ENCODE measurements at regions of chr17 and their contacts with region 1.

Region 1: DNA sequence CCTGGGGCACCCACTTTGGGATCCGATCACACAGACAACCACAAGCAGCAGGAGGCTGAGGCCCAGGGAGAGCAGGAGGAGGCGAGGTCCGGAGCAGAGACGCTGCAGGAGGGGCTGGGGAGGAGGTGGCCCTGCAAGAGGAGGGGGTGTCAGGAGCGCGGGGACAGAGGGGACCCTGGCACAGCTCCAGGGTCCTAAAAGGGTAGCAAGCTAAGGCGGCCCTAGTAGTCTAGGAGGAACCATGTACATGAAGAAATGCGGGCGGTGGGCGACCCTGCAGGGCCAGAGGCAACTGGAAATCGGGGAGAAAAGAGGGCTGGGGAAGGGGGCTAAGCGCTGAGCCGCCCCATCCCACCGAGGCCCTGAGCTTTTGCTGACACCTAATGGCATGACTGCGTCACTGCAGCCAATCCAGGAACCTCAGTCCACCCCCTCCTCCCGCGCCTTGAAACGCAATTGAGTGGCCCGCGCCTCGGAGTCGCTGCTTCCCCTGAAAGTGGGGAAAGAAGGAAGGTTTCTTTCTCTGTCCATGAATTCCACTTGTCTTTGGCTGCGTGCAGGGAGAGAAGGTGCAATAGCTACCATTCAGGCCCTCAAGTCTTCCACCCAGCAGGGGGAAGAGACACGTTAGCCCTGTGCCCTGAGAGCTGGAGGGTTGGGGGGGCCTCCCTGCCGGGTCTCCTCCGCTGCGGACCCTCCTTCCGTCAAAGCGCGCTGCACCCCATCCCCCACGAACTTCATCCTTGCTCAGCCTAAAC is 1.8 kb downstream of the ASGR1 start:
- DNase-seq: peak; percentile 74
- H3K4me3 Mint-ChIP-seq: peak overlapping the region; percentile 53
- H3K27ac Mint-ChIP-seq: peak overlapping the region; percentile 52
- H3K4me1 Mint-ChIP-seq: peaks cover 13% of the 10 kb centered on the region
- H3K27me3 Mint-ChIP-seq: peaks cover 14% of the 10 kb centered on the region

Region 2: DNA sequence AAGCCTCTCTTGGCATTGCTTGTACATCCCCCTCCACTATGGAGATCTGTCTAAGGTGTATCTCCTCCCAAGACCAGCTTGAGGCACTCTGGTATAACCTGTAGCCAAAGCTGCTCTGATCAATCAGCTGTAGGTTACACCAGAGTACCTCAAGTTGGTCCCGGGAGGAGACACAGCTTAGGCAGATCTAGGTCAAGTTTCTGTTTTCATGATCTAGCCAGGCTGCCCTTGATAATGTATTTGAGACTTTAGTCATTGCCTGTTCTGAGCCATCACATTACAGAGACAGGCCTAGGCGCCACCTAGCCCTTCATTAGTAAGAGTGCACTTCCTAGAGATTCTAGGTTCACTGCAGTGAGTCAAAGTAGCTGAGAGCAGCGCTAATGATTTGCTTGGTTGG is 29.6 kb before region 1 on chr17:
- CTCF ChIA-PET with region 1: interaction called, 3 read pairs
- POLR2A ChIA-PET with region 1: interaction called, 10 read pairs
- DNase-seq: no peak
- H3K4me3 Mint-ChIP-seq: no peak overlapping the region
- H3K27ac Mint-ChIP-seq: no peak overlapping the region
- H3K4me1 Mint-ChIP-seq: no peaks in the 10 kb centered on the region
- H3K27me3 Mint-ChIP-seq: peaks cover 10% of the 10 kb centered on the region

Region 3: GRCh38 chr17:7191571-7192270 is 14.3 kb after region 1 on chr17:
- CTCF ChIA-PET with region 1: interaction called, 12 read pairs
- POLR2A ChIA-PET with region 1: no interaction called
- DNase-seq: peak; percentile 35
- H3K4me3 Mint-ChIP-seq: no peak overlapping the region
- H3K27ac Mint-ChIP-seq: no peak overlapping the region
- H3K4me1 Mint-ChIP-seq: no peaks in the 10 kb centered on the region
- H3K27me3 Mint-ChIP-seq: no peaks in the 10 kb centered on the region

Region 4: DNA sequence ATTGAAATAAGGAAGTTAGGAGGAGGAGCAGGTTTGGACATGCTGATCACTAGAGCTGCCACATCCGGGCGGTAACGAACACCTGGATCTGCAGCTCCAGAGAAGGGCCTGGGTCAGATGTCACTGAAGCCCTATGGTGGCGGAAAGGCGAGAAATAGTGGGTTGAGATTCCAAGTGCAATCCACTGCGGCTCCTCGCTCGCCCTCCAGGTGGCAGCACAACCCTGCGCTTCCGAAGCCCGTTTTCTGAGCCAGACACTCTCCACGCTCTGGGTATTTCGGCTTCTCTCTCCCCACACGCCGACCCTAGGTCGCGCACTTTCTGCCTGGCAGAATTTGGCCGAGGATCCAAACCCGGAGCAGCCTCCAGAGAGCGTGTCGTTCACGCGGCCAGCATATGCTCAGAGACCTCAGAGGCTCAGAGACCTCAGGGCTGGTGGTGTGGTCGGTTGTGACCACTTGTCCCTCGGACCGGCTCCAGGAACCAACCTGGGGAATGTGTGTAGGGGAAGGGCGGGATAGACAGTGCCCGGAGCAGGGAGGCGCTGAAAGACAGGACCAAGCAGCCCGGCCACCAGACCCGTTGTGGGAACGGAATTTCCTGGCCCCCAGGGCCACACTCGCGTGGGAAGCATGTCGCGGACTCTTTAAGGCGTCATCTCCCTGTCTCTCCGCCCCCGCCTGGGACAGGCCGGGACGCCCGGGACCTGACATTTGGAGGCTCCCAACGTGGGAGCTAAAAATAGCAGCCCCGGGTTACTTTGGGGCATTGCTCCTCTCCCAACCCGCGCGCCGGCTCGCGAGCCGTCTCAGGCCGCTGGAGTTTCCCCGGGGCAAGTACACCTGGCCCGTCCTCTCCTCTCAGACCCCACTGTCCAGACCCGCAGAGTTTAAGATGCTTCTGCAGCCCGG is 103.4 kb after region 1 on chr17:
- CTCF ChIA-PET with region 1: no interaction called
- POLR2A ChIA-PET with region 1: no interaction called
- DNase-seq: peak; percentile 86
- H3K4me3 Mint-ChIP-seq: peak overlapping the region; percentile 57
- H3K27ac Mint-ChIP-seq: no peak overlapping the region
- H3K4me1 Mint-ChIP-seq: peaks cover 19% of the 10 kb centered on the region
- H3K27me3 Mint-ChIP-seq: peaks cover 22% of the 10 kb centered on the region